Endothelial cell of umbilical vein (primary cell): ENCODE measurements at regions of chr12 and their contacts with region 1.

Region 1: DNA sequence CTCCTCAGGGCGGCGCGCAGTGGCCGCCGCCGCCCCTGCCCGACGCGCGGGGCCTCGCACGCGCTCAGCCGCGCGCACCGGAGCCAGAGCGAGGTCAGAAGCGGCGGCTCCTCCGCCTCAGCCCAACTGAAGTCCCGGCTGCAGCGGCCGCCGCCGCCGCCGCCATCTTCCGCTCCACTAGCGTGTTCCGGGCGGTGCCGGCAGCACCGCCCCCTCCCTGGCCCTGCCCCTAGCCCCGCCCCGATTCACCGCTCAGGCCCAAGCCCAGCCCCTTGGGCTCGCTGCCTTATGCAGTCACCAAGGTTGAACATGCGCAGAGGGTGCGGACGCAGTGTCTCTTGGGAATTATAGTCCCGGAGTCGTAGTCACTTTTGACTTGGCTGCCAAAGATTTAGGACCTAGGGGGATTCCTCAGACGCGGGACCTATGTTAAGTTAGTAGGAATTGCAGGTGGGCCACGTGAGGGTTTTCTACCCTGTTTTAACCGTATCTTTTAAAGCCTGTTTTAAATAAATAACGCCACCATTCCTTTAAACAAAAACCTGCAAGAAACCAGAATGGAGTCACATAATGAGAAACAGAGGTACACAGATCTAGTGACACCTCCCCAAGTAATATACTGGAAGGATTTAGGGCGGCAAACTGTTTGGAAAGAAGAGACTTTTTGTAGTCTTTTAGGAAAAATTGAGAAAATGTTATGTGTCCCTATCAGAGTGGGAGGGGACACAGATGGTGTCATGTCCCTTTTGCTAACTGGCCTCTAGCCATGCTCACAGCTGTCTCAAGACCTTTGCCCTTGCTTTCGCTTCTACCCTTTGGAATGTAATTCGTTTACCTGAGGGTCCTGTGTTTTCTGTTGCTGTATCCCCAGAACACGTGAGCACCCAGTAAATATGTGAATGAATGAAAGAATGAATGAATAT is at the start of gene PPTC7:
- DNase-seq: peak; percentile 95
- H3K4me3 ChIP-seq: peak within 1 kb of the TSS; percentile 77 to 91 (median 84)
- H3K27ac ChIP-seq: peak within 1 kb of the TSS; percentile 30
- H3K4me1 ChIP-seq: peaks cover 29% of the 10 kb centered on the region
- H3K27me3 ChIP-seq: no peaks in the 10 kb centered on the region
- CTCF ChIP-seq: no peak
- POLR2A ChIP-seq: peak; percentile 90
- total RNA-seq, gene PPTC7: 15.2 and 17.0 TPM in 2 replicates

Region 2: GRCh38 chr12:110501752-110502738 is 81.4 kb before region 1 on chr12 and contains the starts of genes RAD9B and VPS29:
- CTCF ChIA-PET with region 1: no interaction called
- POLR2A ChIA-PET with region 1: no interaction called
- dilution Hi-C with region 1: no loop called
- intact Hi-C with region 1: loop called (anchors 1 kb)
- DNase-seq: peak; percentile 99
- H3K4me3 ChIP-seq: peak within 1 kb of the TSS; percentile 58 to 94 (median 80)
- H3K27ac ChIP-seq: peak within 1 kb of the TSS; percentile 68
- H3K4me1 ChIP-seq: peaks cover 13% of the 10 kb centered on the region
- H3K27me3 ChIP-seq: no peaks in the 10 kb centered on the region
- CTCF ChIP-seq: no peak
- POLR2A ChIP-seq: peak; percentile 86
- total RNA-seq, gene RAD9B: 0.15 TPM in 1 of 2 replicates, not detected in the other
- total RNA-seq, gene VPS29: 147 and 155 TPM in 2 replicates

Region 3: GRCh38 chr12:110543252-110543959 is 40.0 kb before region 1 on chr12:
- CTCF ChIA-PET with region 1: interaction called, 4 read pairs
- POLR2A ChIA-PET with region 1: no interaction called
- dilution Hi-C with region 1: no loop called
- intact Hi-C with region 1: loop called (anchors 1 kb)
- DNase-seq: peak; percentile 88
- H3K4me3 ChIP-seq: no peak overlapping the region
- H3K27ac ChIP-seq: peak overlapping the region; percentile 25
- H3K4me1 ChIP-seq: peaks cover 61% of the 10 kb centered on the region
- H3K27me3 ChIP-seq: no peaks in the 10 kb centered on the region
- CTCF ChIP-seq: no peak
- POLR2A ChIP-seq: peak; percentile 22

Region 4: GRCh38 chr12:110698171-110698902 is 114.9 kb after region 1 on chr12:
- CTCF ChIA-PET with region 1: no interaction called
- POLR2A ChIA-PET with region 1: no interaction called
- dilution Hi-C with region 1: no loop called
- intact Hi-C with region 1: loop called (anchors 1 kb)
- DNase-seq: peak; percentile 92
- H3K4me3 ChIP-seq: no peak overlapping the region
- H3K27ac ChIP-seq: peak overlapping the region; percentile 36
- H3K4me1 ChIP-seq: peaks cover 5% of the 10 kb centered on the region
- H3K27me3 ChIP-seq: no peaks in the 10 kb centered on the region
- CTCF ChIP-seq: peak; percentile 67 to 81
- POLR2A ChIP-seq: peak; percentile 24